PC-3 (cell line): ENCODE measurements at regions of chr1 and their contacts with region 1.

Region 1: DNA sequence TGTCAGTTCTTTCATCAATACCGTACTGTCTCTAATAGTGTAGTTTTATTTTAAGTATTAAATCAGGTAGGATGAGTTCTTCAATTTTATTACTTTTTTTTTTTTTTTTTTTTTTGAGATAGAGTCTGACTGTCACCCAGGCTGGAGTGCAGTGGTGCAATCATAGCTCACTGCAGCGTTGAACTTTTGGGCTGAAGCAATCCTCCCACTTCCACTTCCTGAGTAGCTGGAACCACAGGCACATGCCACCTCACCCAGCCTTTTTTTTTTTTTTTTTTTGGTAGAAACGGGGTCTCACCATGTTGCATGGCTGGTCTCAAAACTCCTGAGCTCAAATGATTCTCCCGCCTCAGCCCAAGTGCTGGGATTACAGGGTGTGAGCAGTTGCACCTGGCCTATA is 44.3 kb downstream of the INAVA start:
- DNase-seq: no peak
- ATAC-seq: no peak
- H3K4me3 ChIP-seq: no peak overlapping the region
- H3K27ac ChIP-seq: no peak overlapping the region
- H3K4me1 ChIP-seq: no peaks in the 10 kb centered on the region
- H3K27me3 ChIP-seq: peaks cover 35% of the 10 kb centered on the region; the same call in 1 of the 2 replicates
- CTCF ChIP-seq: no peak

Region 2: DNA sequence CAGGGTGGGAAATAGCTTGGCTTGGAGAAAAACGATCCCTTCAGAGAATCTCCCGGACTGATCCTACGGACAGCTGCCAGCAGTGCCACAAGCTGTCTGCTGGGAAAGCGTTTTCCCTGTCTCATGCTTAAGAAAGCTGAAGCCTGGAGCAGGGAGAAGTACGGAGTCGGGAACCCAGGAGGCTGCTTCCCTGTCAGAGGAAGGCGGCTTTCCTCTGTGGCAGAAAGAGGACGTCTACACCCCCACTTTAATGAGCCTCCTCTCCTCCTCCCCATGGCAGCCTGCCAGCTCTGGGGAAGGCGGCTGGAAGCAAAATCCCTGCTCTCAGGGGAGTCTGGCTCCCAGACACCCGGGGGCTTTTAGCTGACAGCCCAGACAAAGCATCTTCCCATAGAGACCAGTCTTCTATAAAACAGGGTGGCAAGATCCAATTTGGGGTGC is 77.3 kb after region 1 on chr1:
- CTCF ChIA-PET with region 1: no interaction called
- POLR2A ChIA-PET with region 1: interaction called, 34 read pairs
- intact Hi-C with region 1: no loop called
- DNase-seq: peak; percentile 42
- ATAC-seq: peak; percentile 12; the same call in 1 of the 2 replicates
- H3K4me3 ChIP-seq: no peak overlapping the region
- H3K27ac ChIP-seq: no peak overlapping the region
- H3K4me1 ChIP-seq: peaks cover 11% of the 10 kb centered on the region
- H3K27me3 ChIP-seq: peaks cover 33% of the 10 kb centered on the region
- CTCF ChIP-seq: no peak

Region 3: GRCh38 chr1:201034671-201035070 is 95.7 kb after region 1 on chr1:
- CTCF ChIA-PET with region 1: interaction called, 11 read pairs
- POLR2A ChIA-PET with region 1: no interaction called
- intact Hi-C with region 1: no loop called
- DNase-seq: no peak
- ATAC-seq: no peak
- H3K4me3 ChIP-seq: no peak overlapping the region
- H3K27ac ChIP-seq: no peak overlapping the region
- H3K4me1 ChIP-seq: no peaks in the 10 kb centered on the region
- H3K27me3 ChIP-seq: peaks cover 82% of the 10 kb centered on the region
- CTCF ChIP-seq: no peak

Region 4: DNA sequence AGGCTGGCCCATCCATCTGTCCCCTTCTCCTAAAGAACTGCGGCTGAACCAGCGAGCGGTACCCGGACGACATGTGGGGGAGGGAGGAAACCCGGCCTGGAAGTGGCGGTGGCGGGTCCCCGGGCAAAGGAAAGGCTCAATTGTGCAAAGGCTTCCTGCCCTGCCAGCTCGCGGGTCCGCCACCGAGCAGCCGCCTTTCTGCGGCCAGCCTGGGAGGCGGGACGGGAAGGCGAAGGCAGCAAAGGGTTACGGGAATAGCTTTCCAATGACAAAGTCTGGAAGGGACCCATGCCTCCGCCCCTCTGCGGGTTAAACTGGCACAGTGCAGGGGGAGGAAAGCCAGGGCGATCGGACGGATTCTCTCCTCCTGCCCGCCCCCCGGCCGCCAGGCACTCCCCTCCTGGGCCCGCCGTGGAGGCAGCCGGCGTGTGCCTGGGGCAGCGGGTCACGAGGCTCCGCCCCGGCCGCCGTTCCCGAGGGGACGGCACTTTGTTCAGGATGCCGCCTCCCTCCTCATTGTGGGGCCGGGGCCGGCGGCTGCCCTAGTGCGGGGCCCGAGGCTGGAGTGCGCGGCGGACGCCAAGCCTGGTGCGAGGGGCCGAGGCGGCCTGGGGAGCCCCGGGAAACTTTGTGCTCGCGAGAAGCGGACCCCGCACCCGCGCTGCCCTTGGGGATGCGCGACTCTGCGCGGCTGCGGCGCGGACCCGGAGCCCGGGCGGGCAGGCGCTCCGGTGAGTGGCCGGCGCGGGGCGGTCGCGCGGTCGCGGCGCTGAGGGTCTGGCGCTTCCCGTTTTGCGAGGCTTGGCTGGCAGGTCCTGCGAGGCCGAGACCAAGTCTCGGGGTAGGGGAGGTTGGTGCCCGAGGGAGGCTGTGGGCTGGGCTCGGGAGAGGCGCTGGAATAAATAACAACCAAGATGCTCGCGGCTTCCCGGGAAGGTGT is 599.9 kb after region 1 on chr1 and contains the start of gene NAV1:
- CTCF ChIA-PET with region 1: no interaction called
- POLR2A ChIA-PET with region 1: no interaction called
- intact Hi-C with region 1: no loop called
- DNase-seq: peak; percentile 71
- ATAC-seq: peak; percentile 56
- H3K4me3 ChIP-seq: peak within 1 kb of the TSS; percentile 79
- H3K27ac ChIP-seq: no peak within 1 kb of the TSS
- H3K4me1 ChIP-seq: peaks cover 31% of the 10 kb centered on the region
- H3K27me3 ChIP-seq: no peaks in the 10 kb centered on the region
- CTCF ChIP-seq: no peak
- total RNA-seq, gene NAV1: 2.6 and 6.5 TPM in 2 replicates